Activated B cell treated with CpG ODN at 0.5 μM for 24 hours (primary cell): ENCODE measurements at regions of chr12 and their contacts with region 1.

Region 1: DNA sequence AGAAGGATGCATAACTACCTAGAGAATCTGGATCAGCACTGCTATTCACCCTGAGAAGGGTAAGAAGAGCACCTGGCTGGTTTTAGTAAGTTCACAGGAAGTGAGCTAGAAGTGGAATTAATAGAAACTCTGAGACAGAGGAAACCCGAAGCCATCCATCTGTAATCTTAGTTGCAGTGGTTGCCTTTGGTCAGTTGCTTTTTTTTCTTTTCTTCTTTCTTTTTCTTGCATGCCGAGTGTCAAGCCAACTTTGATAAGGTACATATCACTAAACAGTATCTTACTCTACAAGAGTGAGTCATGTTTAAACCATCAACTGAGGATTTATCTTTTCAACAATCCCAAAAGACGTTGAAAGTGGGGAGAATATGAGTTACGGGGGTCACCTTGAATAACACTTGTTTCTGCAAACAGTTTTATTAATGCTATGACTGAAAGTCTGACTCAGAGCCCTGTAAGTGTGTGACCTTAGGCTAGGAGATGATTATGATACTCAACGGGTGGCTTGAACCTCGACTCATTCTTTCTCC is 26.7 kb downstream of the C12orf75 start:
- DNase-seq: no peak
- ATAC-seq: peak; percentile 46
- H3K4me3 Mint-ChIP-seq: peak overlapping the region; percentile 46
- H3K27ac Mint-ChIP-seq: peak overlapping the region; percentile 37
- H3K4me1 Mint-ChIP-seq: peaks cover 47% of the 10 kb centered on the region
- H3K27me3 Mint-ChIP-seq: no peaks in the 10 kb centered on the region
- CTCF ChIP-seq: no peak

Region 2: DNA sequence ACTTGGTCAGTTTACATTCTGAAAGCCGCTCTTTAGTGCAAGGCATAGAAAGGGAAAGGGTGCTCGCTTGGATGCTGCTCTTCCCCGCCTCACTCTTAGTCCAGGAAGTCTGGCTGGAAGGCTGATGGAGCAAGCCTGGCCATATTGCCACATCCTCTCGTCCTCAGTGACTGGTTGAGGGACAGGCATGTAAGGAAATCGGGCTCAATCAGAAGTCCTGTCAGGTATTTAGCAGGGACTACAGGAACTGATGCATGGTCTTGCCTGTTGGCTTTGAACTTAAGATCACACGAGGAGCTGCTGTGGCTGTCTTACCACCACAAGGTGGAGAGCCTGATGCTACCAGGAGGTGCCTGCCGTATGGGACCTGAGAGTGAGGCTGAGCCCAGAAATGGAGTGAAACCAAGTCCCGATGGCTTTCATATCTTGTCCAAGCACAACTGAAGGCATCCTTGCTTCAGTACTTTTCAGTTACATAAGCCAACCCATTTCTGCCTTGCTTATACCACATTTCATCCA is 37.5 kb before region 1 on chr12:
- CTCF ChIA-PET with region 1: no interaction called
- POLR2A ChIA-PET with region 1: no interaction called
- intact Hi-C with region 1: loop called (anchors 5 kb)
- DNase-seq: no peak
- ATAC-seq: no peak
- H3K4me3 Mint-ChIP-seq: no peak overlapping the region
- H3K27ac Mint-ChIP-seq: no peak overlapping the region
- H3K4me1 Mint-ChIP-seq: no peaks in the 10 kb centered on the region
- H3K27me3 Mint-ChIP-seq: no peaks in the 10 kb centered on the region
- CTCF ChIP-seq: no peak

Region 3: DNA sequence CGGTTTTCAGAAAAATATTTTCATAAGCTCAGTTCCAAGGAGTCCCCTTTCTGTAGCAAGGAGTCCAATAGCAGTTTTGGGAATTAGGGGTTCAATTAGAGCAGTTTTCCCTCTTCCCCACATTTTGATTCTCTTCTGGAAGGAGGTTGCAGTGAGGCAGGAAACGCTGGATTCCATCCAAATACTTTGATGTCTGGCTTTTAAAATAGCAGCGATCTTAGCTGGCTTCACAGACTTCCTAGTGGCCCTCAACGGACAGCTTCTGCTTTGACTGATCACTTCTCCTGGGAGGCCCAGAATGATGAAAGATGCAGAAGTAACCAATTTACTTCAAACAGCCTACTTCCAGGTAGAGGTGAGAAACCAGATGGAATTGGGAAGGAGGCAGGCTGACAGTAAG is 36.4 kb after region 1 on chr12:
- CTCF ChIA-PET with region 1: no interaction called
- POLR2A ChIA-PET with region 1: no interaction called
- intact Hi-C with region 1: no loop called
- DNase-seq: no peak
- ATAC-seq: no peak
- H3K4me3 Mint-ChIP-seq: no peak overlapping the region
- H3K27ac Mint-ChIP-seq: no peak overlapping the region
- H3K4me1 Mint-ChIP-seq: no peaks in the 10 kb centered on the region
- H3K27me3 Mint-ChIP-seq: no peaks in the 10 kb centered on the region
- CTCF ChIP-seq: no peak

Region 4: GRCh38 chr12:106774005-106774807 is 1417.0 kb after region 1 on chr12 and contains the start of gene RIC8B:
- CTCF ChIA-PET with region 1: no interaction called
- POLR2A ChIA-PET with region 1: no interaction called
- intact Hi-C with region 1: no loop called
- DNase-seq: peak; percentile 59
- ATAC-seq: peak; percentile 80
- H3K4me3 Mint-ChIP-seq: peak within 1 kb of the TSS; percentile 88
- H3K27ac Mint-ChIP-seq: peak within 1 kb of the TSS; percentile 82
- H3K4me1 Mint-ChIP-seq: peaks cover 19% of the 10 kb centered on the region
- H3K27me3 Mint-ChIP-seq: peaks cover 6% of the 10 kb centered on the region
- CTCF ChIP-seq: no peak
- total RNA-seq, gene RIC8B: 5.8 and 7.4 TPM in 2 replicates